ENCODE measurements at regions of chr16 and their contacts with region 1.

Region 1: DNA sequence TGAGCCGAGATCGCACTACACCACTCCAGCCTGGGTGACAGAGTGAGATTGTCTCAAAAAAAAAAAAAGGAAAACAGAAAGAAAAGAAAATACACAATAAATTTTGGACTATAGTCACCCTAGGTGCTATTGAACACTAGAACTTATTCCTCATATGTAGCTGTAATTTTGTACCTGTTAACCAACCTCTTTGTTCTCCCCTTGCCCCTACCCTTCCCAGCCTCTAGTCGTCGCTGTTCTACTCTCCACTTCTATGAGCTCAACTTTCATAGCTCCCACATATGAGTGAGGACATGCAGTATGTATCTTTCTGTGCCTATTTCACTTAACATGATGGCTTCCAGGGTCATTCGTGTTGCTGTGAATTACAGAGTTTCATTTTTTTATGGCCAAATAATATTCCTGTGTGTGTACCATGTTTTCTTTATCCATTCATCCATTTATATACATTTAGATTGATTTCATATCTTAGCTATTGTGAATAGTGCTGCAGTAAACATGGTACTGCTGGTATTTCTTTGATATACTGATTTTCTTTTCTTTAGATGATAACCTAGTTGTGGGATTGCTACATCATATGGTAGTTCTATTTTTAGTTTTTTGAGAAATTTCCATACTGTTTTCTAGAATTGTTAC is 28.3 kb downstream of the VPS35L start:
- H3K4me3 ChIP-seq: no peak overlapping the region
- H3K27ac ChIP-seq: no peak overlapping the region
- H3K4me1 ChIP-seq: no peaks in the 10 kb centered on the region
- CTCF ChIP-seq: peak; percentile 55; the same call in 1 of the 2 replicates

Region 2: DNA sequence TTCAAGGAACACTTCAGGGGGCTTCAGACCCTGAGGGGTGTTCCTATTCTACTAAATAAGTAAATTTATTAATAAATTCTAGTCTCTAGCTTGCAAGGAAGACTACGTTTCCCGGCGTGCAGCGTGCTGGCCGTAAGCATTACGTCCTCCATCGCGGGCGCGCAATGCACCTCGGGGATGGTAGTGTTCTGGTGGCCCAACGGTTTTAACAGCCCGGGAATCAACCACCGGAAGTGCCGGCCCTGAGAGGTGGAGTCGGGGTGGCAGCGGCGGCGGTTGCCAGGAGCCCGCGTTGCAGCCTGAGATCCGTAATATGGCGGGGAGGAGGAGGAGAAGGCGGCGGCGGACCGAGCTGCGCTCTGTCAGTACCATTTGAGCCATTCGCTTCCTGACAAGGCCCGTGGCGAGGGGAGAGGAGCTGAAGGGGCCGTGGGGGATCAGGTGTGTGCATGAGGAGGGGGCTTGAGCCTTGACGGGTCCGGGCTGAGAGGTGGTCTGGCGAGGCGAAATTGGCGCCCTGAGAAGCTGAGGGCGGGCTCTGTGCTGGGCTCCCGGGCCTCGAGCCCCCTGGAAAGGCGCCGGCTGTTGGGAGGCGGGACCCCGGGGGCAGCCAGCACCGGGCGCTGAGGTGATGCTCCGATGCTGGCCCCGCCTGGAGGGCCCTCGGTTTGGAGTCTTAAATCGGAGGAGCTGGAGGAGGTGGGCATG is 60.0 kb before region 1 on chr16 and contains the start of gene CCP110:
- CTCF ChIA-PET with region 1: interaction called, 10 read pairs
- POLR2A ChIA-PET with region 1: no interaction called
- H3K4me3 ChIP-seq: peak within 1 kb of the TSS; percentile 95
- H3K27ac ChIP-seq: peak within 1 kb of the TSS; percentile 68; the same call in 1 of the 2 replicates
- H3K4me1 ChIP-seq: peaks cover 13% of the 10 kb centered on the region; the same call in 1 of the 2 replicates
- CTCF ChIP-seq: peak; percentile 20; the same call in 1 of the 2 replicates

Region 3: GRCh38 chr16:19555162-19555937 is 28.4 kb before region 1 on chr16 and contains the start of gene VPS35L:
- CTCF ChIA-PET with region 1: interaction called, 18 read pairs
- POLR2A ChIA-PET with region 1: interaction called, 3 read pairs
- H3K4me3 ChIP-seq: peak within 1 kb of the TSS; percentile 86
- H3K27ac ChIP-seq: peak within 1 kb of the TSS; percentile 70
- H3K4me1 ChIP-seq: no peaks in the 10 kb centered on the region
- CTCF ChIP-seq: peak; percentile 92

Region 4: DNA sequence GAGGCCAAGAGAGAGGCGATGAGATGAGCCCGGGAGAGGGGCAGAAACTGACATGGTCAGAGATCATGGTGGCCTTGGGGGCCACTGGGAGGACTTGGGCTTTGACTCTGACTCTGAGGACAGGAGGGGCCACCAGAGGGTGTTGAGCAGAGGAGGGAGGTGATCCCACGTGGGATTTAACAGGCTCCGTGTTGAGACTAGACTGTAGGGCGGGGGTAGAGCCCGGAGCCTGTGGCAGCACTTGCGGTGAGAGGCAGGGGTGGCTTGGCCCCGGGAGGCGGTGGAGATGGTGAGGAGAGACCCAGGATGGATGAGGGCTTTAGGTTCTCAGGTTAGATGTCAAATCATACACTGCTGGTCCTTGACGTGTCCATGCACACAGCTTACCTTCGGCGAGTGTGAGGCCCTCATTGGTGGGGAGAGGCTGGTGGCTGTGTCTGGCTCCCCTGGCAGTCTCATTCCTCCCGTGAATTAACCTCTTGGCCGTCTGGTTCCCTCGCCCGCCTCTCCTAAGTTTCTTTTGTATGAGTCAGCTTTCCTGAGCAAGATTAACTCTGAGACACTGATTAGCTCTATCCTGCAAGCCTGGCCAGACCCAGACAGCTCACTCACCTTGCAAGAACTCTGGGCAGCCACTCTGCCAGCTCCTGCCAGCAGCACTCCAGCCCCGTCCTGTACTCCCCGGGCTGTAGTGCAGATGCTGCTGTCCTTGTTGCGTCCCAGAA is 11.4 kb after region 1 on chr16:
- CTCF ChIA-PET with region 1: interaction called, 38 read pairs
- POLR2A ChIA-PET with region 1: no interaction called
- H3K4me3 ChIP-seq: no peak overlapping the region
- H3K27ac ChIP-seq: no peak overlapping the region
- H3K4me1 ChIP-seq: no peaks in the 10 kb centered on the region
- CTCF ChIP-seq: no peak

Region 5: DNA sequence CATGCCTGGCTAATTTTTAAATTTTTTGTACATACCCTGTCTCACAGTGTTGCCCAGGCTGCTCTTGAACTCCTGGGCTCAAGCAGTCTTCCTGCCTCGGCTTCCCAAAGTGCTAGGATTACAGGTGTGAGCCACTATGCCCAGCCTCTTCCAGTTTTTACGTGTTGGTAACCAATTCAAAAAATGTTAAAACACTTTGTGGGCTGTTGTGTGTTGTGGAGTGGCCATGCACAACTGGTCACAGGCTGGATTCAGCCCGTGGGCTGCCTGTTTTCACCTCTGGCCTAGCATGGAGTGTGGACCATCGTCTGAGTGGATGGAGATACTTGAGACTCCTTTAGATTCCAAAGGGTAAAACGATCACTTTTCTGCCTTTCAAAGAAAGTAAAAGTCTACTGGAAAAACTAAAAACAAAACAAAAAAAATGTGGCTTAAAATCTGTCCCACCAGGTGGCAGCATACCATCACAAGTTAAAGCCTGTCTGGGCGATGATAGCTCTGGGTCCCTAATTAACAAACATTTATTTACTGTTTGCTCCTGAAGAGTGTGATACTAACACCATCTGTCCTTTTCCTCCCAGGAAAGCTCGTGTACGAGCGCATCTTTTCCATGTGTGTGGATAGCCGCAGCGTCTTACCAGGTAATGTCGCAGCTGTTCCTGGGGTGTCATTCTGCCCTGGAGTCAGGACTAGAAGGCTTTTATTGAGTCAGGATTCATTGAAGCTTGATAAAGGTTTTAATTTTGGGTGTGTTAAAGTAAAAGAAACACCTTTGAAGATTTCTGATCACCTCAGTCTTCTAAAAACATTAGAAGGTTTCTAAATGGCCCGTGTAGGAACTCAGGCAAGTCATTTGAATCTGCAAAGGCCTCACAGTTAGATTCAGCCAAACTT is 17.5 kb after region 1 on chr16:
- CTCF ChIA-PET with region 1: interaction called, 38 read pairs
- POLR2A ChIA-PET with region 1: no interaction called
- H3K4me3 ChIP-seq: no peak overlapping the region
- H3K27ac ChIP-seq: no peak overlapping the region
- H3K4me1 ChIP-seq: no peaks in the 10 kb centered on the region
- CTCF ChIP-seq: peak; percentile 54; the same call in 1 of the 2 replicates

Region 6: DNA sequence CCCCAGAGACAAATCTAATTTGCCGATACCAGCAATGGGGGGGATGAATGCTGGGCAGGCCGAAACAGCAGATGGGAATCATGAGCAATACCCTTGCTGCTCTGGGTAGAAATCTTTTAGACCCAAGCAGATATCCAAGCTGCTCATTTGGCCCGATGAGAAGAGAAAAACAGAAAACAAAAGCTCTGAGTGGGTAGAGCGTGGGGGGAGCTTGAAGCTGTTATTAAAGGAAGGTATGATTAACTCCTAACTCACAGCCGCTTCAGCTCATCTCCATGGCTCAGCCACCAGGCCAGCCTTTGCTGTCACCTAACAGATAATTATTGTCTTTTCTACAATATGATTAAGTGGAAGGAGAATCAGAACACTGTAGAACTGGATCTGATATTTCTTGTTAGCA is 30.1 kb after region 1 on chr16:
- CTCF ChIA-PET with region 1: no interaction called
- POLR2A ChIA-PET with region 1: no interaction called
- H3K4me3 ChIP-seq: no peak overlapping the region
- H3K27ac ChIP-seq: no peak overlapping the region
- H3K4me1 ChIP-seq: no peaks in the 10 kb centered on the region
- CTCF ChIP-seq: no peak

Region 7: GRCh38 chr16:19886073-19886941 is 302.5 kb after region 1 on chr16:
- CTCF ChIA-PET with region 1: interaction called, 13 read pairs
- POLR2A ChIA-PET with region 1: no interaction called
- H3K4me3 ChIP-seq: no peak overlapping the region
- H3K27ac ChIP-seq: no peak overlapping the region
- H3K4me1 ChIP-seq: no peaks in the 10 kb centered on the region
- CTCF ChIP-seq: peak; percentile 87